ENCODE measurements at regions of chr3 and their contacts with region 1.

Region 1: DNA sequence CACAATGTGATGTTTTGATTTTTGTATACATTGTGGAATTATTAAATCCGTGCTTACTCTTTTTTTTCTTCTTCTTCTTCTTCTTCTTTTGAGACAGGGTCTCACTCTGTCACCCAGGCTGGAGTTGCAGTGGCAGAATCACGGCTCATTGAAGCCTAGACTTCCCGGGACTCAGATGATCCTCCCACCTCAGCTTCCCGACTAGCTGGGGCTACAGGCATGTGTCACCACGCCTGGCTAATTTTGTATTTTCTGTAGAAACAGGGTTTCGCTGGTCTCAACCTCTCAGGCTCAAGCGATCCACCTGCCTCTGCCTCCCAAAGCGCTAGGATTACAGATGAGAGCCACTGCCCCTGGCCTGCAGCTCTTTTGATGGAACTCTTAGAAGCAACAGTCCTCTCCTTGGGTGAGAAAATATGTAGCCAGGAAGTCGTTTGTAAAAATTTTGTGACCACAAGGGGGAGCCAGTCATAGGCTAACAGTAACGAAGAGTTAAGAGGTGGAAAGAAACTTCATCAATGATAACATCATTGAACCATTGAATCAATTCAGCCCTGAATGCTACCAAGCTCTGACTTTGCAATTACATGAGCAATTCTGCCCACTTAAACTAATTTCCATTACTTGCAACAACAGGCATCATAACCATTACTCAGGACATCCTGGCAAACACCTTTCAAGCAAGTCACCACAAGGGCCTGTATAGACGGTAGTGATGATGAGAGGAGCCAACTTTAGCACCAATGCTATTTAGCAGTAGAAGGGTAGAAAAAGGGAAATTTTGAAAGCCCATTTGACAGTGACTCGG is 16.7 kb upstream of the CMTM7 start:
- DNase-seq: peak in 3 of 10 donors; percentile 25 to 40 (median 34)

Region 2: GRCh38 chr3:32077260-32078084 is 297.5 kb before region 1 on chr3:
- intact Hi-C with region 1: no loop called
- DNase-seq: no peak

Region 3: DNA sequence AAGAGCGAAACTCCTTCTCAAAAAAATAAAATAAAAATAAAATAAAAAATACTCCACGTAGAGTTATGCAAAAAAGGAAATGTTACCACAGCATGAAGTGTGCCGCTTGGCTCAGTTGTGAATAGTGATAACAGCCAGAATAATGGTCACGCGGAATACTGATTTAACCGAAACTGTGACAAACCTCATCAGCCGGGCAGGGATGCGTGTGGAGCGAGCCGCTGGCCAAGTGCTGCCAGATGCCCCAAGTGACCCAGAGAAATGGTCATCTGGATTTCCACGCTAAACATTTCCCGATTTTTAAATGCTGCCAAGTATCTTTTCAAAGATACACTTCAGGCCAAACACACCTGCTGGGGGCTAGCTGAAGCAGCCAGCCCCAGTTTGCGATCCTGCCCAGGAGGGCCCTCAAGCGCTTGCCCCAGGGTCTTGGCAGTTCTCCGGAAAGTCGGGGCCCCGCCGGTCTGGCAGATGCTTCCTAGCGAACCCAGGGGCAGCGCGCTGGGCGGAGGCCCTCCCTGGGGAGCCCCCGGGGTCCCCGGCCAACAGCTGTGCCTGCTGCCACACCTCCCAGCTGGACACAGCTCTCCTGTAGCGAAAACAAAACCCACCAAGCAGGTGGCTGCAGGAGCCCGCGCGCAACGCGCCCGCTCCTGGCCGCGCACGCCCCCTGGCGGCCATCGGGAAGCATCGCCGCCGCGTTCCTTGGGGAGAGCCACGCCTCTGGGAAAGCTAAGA is 92.5 kb after region 1 on chr3:
- intact Hi-C with region 1: loop called (anchors 5 kb)
- DNase-seq: peak; percentile 37 to 95 (median 74)

Measured in posterior cingulate gyrus (tissue), 11 donors.